Motor neuron (in vitro differentiated cells): ENCODE measurements at regions of chr20 and their contacts with region 1.

Region 1: DNA sequence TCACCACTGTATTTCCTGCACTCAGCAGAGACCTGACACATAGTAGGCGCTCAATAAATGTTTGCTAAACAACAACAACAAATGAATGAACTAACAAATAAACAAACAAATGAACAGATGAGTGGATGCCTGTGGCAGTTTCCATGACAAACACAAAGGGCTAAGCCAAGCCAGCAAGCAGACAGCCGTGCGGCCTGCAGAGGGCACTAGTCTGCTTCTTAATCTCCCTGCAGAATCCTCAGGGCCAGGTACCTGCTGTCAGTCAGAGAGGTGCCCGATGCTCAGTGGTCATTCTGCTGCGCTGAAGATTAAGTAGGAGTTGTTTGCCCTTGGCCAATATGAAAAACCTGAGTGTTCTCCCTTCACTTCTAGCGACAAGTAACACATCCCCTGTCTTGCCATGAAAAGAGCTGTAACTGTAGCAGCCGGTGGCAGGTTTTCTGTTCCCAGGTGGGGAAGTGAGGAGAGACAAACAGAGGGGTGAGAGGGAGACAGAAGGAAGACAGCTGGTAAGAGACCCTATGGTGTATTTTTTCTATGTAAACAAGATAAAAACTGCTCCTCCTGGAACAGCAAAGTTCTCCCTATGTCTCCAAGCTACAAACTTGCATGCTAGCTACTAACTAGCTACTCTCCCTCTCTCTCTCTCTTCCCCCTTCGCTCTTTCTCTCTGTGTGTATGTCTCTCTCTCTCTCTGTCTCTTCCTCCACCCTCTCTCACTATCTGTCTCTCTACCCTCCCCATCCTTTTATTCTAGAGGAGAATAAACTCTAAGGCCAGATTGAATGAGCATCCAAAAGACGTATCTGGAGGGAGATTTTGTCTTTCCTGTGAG is at the start of gene MC3R:
- ATAC-seq: peak; percentile 64 to 96 (median 72)
- H3K4me3 ChIP-seq: no peak within 1 kb of the TSS
- H3K27ac ChIP-seq: no peak within 1 kb of the TSS
- H3K4me1 ChIP-seq: no peaks in the 10 kb centered on the region
- total RNA-seq, gene MC3R: 0.42 to 0.84 (median 0.62) TPM in 3 of 8 experiments, not detected in the others

Region 2: GRCh38 chr20:56343861-56344381 is 95.8 kb after region 1 on chr20:
- in situ Hi-C with region 1: loop called in 1 of 9 experiments (anchors 10 kb)
- ATAC-seq: peak; percentile 86 to 98 (median 91)
- H3K4me3 ChIP-seq: peak overlapping the region; percentile 21 to 34 (median 29)
- H3K27ac ChIP-seq: no peak overlapping the region
- H3K4me1 ChIP-seq: peaks cover 12 to 15% of the 10 kb centered on the region in 2 donors

Region 3: DNA sequence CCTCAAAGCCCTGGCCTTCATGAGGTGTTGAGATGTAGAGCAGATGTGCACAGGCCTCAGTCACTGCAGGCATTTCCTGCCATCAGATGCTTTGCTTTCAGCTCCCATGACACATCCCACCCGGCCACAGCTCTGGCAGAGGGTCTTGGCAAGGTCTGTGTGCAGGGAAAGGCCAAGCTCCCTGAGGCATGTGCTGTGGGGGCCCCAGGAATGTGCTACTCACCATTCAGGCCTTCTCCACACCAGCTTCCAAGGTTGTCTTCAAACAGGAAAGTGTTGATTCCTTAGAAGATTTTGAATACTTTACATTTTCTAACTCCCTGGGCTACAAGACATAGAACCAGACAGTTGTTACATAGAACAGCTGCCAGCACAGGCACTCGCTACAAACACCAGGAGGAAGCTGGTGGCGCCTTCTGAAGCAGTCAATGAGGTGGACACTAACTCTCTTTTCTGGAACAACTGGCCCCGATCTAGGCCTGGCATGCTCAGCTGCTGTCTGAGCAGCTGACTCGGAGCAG is 191.7 kb after region 1 on chr20:
- in situ Hi-C with region 1: no loop called
- ATAC-seq: no peak
- H3K4me3 ChIP-seq: no peak overlapping the region
- H3K27ac ChIP-seq: no peak overlapping the region
- H3K4me1 ChIP-seq: no peaks in the 10 kb centered on the region